ENCODE measurements at regions of chr16 and their contacts with region 1.

Region 1: GRCh38 chr16:68520649-68521086 is 18.4 kb upstream of the ZFP90 start:
- DNase-seq: peak; percentile 94
- ATAC-seq: peak; percentile 99
- H3K4me3 Mint-ChIP-seq: peak overlapping the region; percentile 11
- H3K27ac Mint-ChIP-seq: peak overlapping the region; percentile 19
- H3K4me1 Mint-ChIP-seq: peaks cover 4% of the 10 kb centered on the region
- H3K27me3 Mint-ChIP-seq: peaks cover 2% of the 10 kb centered on the region

Region 2: DNA sequence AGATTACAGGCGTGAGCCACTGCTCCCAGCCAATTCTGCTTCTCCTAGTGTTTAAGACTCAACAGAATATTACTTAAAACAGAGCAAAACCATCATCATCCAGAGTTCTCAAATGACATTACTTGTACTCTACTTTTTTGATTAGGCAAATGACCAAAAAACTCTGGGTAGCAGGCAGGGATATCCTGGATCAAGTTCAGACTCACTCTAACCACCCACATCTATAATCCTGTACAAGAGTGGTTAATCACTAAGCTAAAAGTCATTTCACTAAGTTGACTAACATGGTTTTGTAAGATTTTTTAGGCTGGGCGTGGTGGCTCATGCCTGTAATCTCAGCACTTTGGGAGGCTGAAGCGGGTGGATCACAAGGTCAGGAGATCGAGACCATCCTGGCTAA is 1696.7 kb before region 1 on chr16:
- CTCF ChIA-PET with region 1: no interaction called
- POLR2A ChIA-PET with region 1: no interaction called
- intact Hi-C with region 1: no loop called
- DNase-seq: no peak
- ATAC-seq: no peak
- H3K4me3 Mint-ChIP-seq: no peak overlapping the region
- H3K27ac Mint-ChIP-seq: no peak overlapping the region
- H3K4me1 Mint-ChIP-seq: peaks cover 15% of the 10 kb centered on the region
- H3K27me3 Mint-ChIP-seq: no peaks in the 10 kb centered on the region

Region 3: DNA sequence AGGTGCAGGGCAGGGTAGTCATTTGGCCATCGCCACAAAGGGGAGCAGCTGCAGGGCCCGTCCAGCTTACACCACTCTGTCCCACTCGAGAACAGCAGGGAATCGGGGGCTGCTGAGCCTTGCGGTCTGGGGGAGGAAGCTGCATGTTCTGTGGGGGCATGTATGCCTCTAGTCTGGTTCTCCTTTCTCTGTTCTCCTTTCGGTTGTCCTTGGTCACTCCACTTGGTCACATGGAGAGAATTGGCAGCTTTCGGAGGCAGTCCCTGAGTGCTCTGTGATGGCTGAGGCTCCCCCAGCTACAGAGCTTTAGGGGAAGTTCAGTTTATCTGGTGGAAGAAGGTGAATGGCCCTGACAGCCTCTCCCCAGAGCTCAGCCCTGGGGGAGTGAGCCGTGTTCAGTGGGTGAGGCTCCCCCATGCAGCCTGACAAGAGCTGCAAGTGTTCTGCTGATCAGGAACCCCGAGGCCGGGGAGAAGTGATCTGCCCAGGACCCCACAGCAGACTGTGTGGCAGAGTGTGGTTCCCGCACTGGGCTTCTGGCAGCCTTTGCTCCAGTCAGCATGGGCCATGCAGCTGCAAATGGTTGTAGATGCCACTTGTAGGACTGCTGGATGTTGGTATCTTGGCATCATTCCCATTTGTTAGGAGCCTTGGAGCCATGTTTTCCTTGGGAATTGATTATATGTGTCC is 50.1 kb before region 1 on chr16:
- CTCF ChIA-PET with region 1: interaction called, 16 read pairs
- POLR2A ChIA-PET with region 1: no interaction called
- intact Hi-C with region 1: no loop called
- DNase-seq: peak; percentile 24
- ATAC-seq: peak; percentile 40
- H3K4me3 Mint-ChIP-seq: peak overlapping the region; percentile 52
- H3K27ac Mint-ChIP-seq: peak overlapping the region; percentile 66
- H3K4me1 Mint-ChIP-seq: peaks cover 25% of the 10 kb centered on the region
- H3K27me3 Mint-ChIP-seq: no peaks in the 10 kb centered on the region

Region 4: DNA sequence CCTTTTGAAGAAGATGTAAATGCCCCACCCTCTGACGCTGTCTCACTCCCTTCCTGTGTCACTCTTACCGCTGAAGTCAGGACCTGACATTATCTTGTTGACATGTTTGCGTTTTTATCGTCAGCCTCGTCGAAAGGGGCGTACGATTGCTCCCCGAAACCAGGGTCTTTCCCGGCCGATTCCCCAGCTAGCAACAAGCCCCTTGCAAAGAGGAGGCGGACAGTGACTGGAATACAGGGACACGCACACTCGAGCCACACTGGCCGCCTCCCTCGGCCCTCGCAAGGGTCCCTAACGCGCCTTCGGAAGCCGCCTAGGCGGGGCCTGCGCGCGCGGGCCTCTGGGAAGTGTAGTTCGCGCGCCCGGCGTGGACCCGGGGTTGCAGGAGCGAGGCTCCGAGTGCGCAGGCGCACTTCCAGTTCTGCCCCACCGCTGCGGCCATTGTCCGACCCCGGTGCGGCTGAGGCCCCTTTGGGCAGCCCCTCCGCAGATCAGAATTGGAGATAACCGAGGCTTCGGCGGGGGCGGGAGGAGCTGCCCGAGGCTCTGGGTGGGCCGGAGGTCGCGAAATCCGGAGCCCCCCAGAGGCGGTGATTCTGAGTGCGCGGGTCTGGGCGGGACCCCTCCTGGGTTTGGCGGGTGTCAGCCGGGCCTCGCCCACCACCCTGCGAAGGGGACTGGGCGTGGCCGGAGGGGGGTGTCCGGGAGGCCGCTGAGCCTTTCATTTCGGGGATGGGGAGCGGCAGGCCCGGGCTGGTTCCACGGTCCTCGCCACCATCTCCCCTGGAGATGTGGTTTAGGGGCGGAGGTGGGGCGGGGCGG is 18.4 kb after region 1 on chr16 and contains the start of gene ZFP90:
- CTCF ChIA-PET with region 1: interaction called, 19 read pairs
- POLR2A ChIA-PET with region 1: no interaction called
- intact Hi-C with region 1: loop called in 1 of 2 experiments (anchors 1 kb)
- DNase-seq: peak; percentile 93
- ATAC-seq: peak; percentile 96
- H3K4me3 Mint-ChIP-seq: peak within 1 kb of the TSS; percentile 89
- H3K27ac Mint-ChIP-seq: peak within 1 kb of the TSS; percentile 98
- H3K4me1 Mint-ChIP-seq: peaks cover 16% of the 10 kb centered on the region
- H3K27me3 Mint-ChIP-seq: no peaks in the 10 kb centered on the region
- total RNA-seq, gene ZFP90: 31.4 to 31.6 TPM